Mucosa of descending colon (tissue), 3 donors: ENCODE measurements at regions of chr5 and their contacts with region 1.

Region 1: DNA sequence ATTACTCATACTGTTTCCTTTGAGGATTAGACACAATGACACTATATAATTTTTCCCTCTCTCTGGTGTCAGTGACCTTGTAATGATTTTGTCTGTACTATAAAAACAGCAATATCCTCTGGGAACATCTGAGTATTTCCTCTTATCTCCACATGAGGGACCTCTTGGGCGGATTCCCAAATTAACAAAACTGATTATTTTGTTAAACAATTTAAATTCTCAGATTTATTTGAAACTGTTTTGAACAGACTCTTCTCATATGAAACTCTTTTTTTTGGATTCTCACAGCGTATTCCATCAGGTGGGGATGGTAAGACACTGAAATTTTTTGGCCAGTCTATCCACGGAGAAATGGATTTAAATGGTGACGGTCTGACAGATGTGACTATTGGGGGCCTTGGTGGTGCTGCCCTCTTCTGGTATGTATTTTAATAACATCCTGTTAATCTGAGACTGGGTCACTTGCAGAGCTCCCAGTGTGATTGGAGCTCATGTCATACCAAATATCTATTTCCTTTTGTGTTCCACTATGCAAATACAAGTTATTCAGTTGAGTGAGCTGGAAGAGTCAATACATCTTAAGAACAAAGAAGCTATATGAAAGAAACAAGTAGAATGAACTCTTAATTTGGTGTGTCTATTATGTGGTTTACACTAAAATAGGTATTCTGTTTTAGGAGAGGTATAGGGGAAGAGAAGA is 73.8 kb upstream of the ITGA2 start:
- DNase-seq: peak in 1 of 3 donors; percentile 67
- ATAC-seq: peak; percentile 93
- H3K4me3 ChIP-seq: no peak overlapping the region
- H3K4me1 ChIP-seq: no peaks in the 10 kb centered on the region
- CTCF ChIP-seq: peak; percentile 30

Region 2: DNA sequence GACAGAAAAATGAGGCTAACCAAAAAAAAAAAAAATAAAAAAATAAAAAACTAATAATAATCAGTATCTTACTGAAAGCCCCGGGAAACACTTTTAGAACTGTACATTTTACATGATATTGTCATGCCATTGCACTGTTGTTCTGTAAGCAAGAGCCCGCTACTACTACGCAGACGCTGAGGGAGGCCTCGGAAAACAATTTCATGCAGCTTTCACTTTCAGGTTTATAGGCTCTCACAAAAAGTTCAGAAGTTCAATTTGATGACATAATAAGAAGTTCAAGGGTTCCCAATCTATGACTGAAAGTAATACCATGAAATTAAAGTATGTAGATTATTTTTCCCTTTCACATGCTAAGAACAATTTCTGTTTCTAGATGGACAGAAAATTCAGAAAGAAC is 445.9 kb before region 1 on chr5:
- intact Hi-C with region 1: no loop called
- DNase-seq: peak in 1 of 3 donors; percentile 5
- ATAC-seq: peak; percentile 54
- H3K4me3 ChIP-seq: no peak overlapping the region
- H3K4me1 ChIP-seq: no peaks in the 10 kb centered on the region
- CTCF ChIP-seq: no peak

Region 3: DNA sequence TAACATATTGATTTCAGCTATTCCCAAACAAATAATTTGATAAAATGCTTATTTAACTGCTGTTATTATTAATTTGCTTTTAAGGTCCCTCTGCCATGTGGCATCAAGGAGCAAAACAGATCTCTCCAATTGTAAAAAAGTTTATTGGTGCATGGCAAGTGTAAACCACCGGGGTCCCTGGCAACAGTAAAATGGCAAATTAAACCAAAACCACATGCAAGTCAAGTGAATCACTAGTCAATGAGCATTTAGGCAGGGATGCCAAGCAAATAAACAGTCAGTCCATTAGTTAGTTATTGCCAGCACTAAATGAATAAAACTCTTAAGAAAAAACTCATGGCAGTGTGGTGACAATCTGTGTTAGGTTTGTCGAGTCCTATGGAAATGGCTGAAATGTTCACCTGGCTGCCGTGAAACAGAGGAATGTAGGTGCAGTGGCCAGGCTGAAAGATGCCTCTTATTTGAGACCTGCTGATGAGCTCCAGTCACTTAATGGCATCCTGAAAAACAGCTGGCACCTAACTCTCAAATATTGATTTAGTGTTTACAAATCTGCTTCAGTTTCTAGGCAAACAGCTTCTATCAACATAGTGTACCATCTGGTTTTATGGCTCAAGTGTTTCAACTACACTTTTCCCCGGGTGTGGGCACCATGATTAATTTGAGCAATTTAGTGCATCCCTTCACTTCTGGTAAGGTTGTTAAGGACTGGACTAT is 424.1 kb before region 1 on chr5:
- intact Hi-C with region 1: no loop called
- DNase-seq: no peak
- ATAC-seq: peak; percentile 34
- H3K4me3 ChIP-seq: no peak overlapping the region
- H3K4me1 ChIP-seq: no peaks in the 10 kb centered on the region
- CTCF ChIP-seq: no peak

Region 4: GRCh38 chr5:52787600-52788504 is 127.5 kb before region 1 on chr5 and contains the starts of genes ITGA1 and PELO:
- intact Hi-C with region 1: loop called (anchors 2 to 10 kb)
- DNase-seq: peak; percentile 82 to 85 (median 83)
- ATAC-seq: peak; percentile 86
- H3K4me3 ChIP-seq: peak within 1 kb of the TSS; percentile 41
- H3K4me1 ChIP-seq: peaks cover 7% of the 10 kb centered on the region
- CTCF ChIP-seq: no peak
- total RNA-seq, gene ITGA1: 18.7 to 207 (median 42.0) TPM
- total RNA-seq, gene PELO: 14.9 to 59.4 (median 17.9) TPM

Region 5: DNA sequence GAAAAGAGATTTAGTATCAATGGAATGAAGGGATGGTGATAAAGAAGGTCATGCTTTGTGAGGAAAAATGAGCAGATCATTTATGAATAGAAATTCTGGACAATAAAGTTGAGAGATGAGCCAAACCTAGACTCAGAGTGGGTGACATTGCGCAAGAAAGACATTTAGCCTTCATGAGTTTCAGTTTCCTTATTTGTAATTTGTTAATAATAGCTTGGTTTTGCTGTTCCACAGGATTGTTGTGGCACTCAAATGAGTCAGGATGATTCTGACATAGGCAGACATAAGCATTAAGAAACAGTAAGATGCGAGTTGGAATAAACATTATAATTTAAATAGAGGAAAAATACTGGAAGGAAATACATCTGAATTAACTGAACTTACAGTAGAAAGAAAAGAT is 108.6 kb after region 1 on chr5:
- intact Hi-C with region 1: no loop called
- DNase-seq: peak in 1 of 3 donors; percentile 5
- ATAC-seq: peak; percentile 24
- H3K4me3 ChIP-seq: no peak overlapping the region
- H3K4me1 ChIP-seq: no peaks in the 10 kb centered on the region
- CTCF ChIP-seq: no peak